ENCODE measurements at regions of chr11 and their contacts with region 1.

Region 1: DNA sequence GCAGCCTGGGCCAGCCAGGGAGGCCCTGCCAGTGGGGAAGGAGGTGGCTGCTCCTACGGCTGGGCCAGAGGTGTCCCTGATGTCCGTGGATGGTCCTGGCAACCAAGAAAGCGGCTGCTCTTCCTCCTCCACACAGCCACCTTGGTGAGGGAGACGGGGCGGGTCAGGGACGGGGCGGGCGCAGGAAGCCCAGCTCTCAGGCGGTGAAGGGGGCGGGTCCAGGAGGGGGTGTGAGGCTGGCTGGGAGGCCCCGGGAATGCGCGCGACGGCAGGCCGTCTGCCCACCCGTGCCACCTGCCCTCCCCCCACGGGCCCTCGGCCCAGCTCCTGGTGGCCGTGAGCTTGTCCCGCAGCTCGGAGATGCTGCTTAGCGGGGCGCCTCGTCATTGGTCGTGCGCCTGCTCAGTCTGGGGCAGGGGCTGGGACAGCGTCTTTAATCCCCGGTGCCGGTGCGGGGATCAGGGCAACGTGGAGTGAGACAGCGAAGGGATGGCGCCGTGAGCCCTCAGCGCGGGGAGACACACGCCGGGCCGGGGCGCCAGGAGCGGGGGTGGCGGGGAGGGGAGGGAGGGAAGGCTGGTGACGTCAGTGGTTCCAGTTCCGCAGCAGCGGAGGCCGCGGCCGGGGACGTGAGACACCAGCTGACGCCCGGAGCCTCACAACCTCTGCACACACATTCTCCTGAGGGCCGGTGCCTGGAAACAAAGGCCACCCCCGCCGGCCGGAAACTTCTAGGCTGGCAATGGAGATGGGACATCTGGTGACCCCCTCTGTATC is 6.7 kb upstream of the BRSK2 start:
- DNase-seq: no peak
- H3K4me3 ChIP-seq: peak overlapping the region; percentile 42
- CTCF ChIP-seq: no peak

Region 2: GRCh38 chr11:1335811-1336761 is 46.9 kb before region 1 on chr11:
- in situ Hi-C with region 1: no loop called
- DNase-seq: no peak
- H3K4me3 ChIP-seq: peak overlapping the region; percentile 25
- CTCF ChIP-seq: no peak

Region 3: DNA sequence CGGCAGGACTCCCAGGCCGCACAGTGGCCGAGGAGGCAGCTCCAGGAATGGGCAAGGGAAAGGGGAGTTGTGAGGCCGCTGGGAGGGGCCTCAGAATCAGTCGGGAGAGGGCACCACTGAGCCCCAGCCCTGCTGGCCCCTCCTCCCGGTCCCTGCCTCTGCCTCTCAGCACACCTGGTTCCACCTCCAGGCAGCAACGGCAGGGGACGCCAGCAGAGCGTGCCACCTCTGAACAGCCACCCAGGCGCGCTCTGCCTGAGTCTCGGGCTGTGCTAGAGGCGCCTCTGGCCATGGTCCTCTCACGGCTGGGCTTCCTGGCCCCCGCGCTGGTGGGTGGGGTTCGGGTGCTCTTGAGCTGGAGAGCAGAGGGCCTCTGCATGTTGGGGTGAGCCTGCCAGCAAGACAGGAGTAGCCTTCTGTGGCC is 70.6 kb after region 1 on chr11:
- in situ Hi-C with region 1: loop called (anchors 5 kb)
- DNase-seq: no peak
- H3K4me3 ChIP-seq: no peak overlapping the region
- CTCF ChIP-seq: no peak

Measured in astrocyte of the cerebellum (primary cell).